ENCODE measurements at regions of chr7 and their contacts with region 1.

Region 1: DNA sequence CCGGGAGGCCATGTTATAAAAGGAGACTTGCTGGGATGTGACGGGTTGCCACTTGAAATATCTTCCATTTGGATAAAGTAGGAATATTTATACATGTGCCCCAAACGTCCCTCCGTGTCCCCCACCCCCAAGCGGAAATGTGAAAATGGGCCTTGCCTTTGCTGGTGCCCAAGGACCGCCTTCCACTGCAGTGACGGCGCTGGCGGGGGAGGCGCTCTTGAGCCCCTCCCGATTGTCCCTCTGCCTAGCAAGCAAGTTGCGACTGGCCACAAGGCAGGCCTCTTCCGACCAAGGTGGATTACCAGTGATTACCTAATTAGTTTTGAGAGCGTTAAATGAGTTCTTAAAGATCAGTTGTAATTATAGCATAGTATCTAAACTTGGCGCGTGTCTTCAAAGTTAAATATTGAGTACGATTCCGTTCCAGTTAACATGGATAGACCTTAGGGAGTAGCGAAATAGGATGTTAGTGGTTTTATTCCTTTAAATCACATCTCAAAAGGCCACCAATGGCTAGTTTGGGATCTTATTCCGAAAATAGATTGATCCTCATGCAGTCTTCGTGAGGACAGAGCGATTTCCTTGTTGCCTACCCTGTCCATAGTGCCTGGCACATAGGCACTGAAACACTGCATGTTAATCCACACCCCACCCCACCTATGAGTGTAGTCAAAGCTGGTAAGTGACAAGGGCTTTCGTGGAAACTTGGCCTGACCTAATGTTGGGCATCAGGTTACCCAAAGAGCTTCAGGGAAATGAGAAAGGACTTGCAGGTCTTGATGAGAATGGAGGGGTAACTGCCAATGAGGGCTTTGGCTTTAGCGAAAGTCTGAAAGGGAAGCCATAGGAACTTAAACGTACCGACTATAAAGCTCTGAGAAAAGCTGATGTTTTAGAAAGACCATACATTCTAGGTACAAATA is 1.1 kb downstream of the PPIA start:
- DNase-seq: peak; percentile 64
- ATAC-seq: peak; percentile 58
- H3K4me3 ChIP-seq: peak overlapping the region; percentile 80 to 96
- H3K27ac ChIP-seq: peak overlapping the region; percentile 99
- H3K4me1 ChIP-seq: peaks cover 9 to 41% of the 10 kb centered on the region in 2 experiments; a peak in 3 of 4 replicates
- H3K27me3 ChIP-seq: no peaks in the 10 kb centered on the region
- CTCF ChIP-seq: peak in 2 of 3 experiments; percentile 39 to 40; a peak in 3 of 6 replicates
- POLR2A ChIP-seq: no peak
- RAD21 ChIP-seq: no peak

Region 2: GRCh38 chr7:44375236-44375699 is 422.3 kb before region 1 on chr7:
- CTCF ChIA-PET with region 1: no interaction called
- POLR2A ChIA-PET with region 1: no interaction called
- RAD21 ChIA-PET with region 1: no interaction called
- intact Hi-C with region 1: no loop called
- DNase-seq: no peak
- ATAC-seq: peak; percentile 75
- H3K4me3 ChIP-seq: no peak overlapping the region
- H3K27ac ChIP-seq: no peak overlapping the region
- H3K4me1 ChIP-seq: peaks cover 0 to 14% of the 10 kb centered on the region in 2 experiments; a peak in 1 of 4 replicates
- H3K27me3 ChIP-seq: peaks cover 4% of the 10 kb centered on the region; the same call in 1 of the 2 replicates
- CTCF ChIP-seq: peak in 2 of 3 experiments; percentile 60 to 64; a peak in 4 of 6 replicates
- POLR2A ChIP-seq: no peak
- RAD21 ChIP-seq: peak; percentile 59

Region 3: DNA sequence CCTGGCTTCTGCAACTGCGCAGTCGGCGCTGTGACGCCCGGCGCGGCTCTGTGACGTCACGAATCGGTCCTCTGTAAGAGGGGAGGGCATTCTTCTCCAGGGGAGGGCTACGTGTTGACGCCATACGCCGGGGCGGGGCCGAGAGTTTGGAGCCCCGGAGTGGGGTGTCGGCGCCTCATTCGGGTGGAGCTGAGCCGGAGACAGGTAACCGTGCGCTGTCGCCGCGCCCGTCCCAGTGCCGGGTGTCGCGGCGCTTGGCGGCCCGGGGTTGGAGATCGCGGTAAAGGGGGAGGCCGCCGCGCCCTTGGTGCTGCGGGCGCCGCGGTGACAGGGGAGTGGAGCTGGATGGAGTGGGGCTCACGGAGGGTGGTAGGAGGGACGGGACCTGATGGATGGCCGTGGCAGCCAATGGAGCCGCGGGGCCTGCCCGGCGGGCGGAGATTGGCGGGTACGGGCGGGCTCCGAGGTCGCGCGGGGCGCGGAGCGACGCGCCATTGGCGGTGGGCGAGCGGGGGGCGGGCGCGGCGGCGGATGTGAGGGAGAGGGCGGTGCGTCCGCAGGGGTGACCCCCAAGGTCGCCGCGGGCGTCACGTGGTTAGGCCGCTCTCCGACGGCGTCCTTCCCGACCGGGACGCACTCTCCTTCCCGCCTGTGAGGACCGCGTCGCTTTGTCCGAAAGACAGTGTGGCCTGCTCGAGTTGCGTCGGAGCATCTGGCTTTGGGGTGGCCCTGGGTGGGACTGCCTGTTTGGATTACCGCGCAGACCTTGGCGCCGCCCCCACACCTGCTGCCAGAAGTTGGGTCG is 190.9 kb before region 1 on chr7 and contains the start of gene OGDH:
- CTCF ChIA-PET with region 1: no interaction called
- POLR2A ChIA-PET with region 1: no interaction called
- RAD21 ChIA-PET with region 1: no interaction called
- intact Hi-C with region 1: loop called (anchors 1 kb)
- DNase-seq: peak; percentile 96
- ATAC-seq: peak; percentile 99
- H3K4me3 ChIP-seq: peak within 1 kb of the TSS; percentile 68 to 76
- H3K27ac ChIP-seq: peak within 1 kb of the TSS; percentile 88
- H3K4me1 ChIP-seq: peaks cover 17 to 32% of the 10 kb centered on the region in 2 experiments
- H3K27me3 ChIP-seq: no peaks in the 10 kb centered on the region
- CTCF ChIP-seq: no peak
- POLR2A ChIP-seq: peak; percentile 31
- RAD21 ChIP-seq: no peak; the same call in 1 of the 2 replicates
- total RNA-seq, gene OGDH: 69.1 TPM

Region 4: GRCh38 chr7:44638611-44639557 is 158.7 kb before region 1 on chr7:
- CTCF ChIA-PET with region 1: no interaction called
- POLR2A ChIA-PET with region 1: interaction called, 3 read pairs
- RAD21 ChIA-PET with region 1: no interaction called
- intact Hi-C with region 1: loop called (anchors 1 kb)
- DNase-seq: peak; percentile 74
- ATAC-seq: peak; percentile 84
- H3K4me3 ChIP-seq: peak overlapping the region; percentile 25 to 40
- H3K27ac ChIP-seq: peak overlapping the region; percentile 98
- H3K4me1 ChIP-seq: peaks cover 43 to 68% of the 10 kb centered on the region in 2 experiments
- H3K27me3 ChIP-seq: no peaks in the 10 kb centered on the region
- CTCF ChIP-seq: no peak
- POLR2A ChIP-seq: peak; percentile 71
- RAD21 ChIP-seq: peak; percentile 35

Region 5: GRCh38 chr7:44847508-44847920 is 49.9 kb after region 1 on chr7:
- CTCF ChIA-PET with region 1: interaction called, 3 read pairs
- POLR2A ChIA-PET with region 1: interaction called, 3 read pairs
- RAD21 ChIA-PET with region 1: no interaction called
- intact Hi-C with region 1: loop called (anchors 5 kb)
- DNase-seq: peak; percentile 51
- ATAC-seq: peak; percentile 76
- H3K4me3 ChIP-seq: peak overlapping the region; percentile 84 to 97
- H3K27ac ChIP-seq: peak overlapping the region; percentile 81
- H3K4me1 ChIP-seq: peaks cover 5 to 24% of the 10 kb centered on the region in 2 experiments; a peak in 3 of 4 replicates
- H3K27me3 ChIP-seq: no peaks in the 10 kb centered on the region
- CTCF ChIP-seq: peak; percentile 61 to 85 (median 76)
- POLR2A ChIP-seq: no peak
- RAD21 ChIP-seq: peak; percentile 90

Region 6: GRCh38 chr7:44921607-44922359 is 124.2 kb after region 1 on chr7:
- CTCF ChIA-PET with region 1: no interaction called
- POLR2A ChIA-PET with region 1: no interaction called
- RAD21 ChIA-PET with region 1: no interaction called
- intact Hi-C with region 1: loop called (anchors 10 kb)
- DNase-seq: peak; percentile 59
- ATAC-seq: peak; percentile 98
- H3K4me3 ChIP-seq: no peak overlapping the region
- H3K27ac ChIP-seq: no peak overlapping the region
- H3K4me1 ChIP-seq: peaks cover 0 to 6% of the 10 kb centered on the region in 2 experiments; a peak in 1 of 4 replicates
- H3K27me3 ChIP-seq: no peaks in the 10 kb centered on the region
- CTCF ChIP-seq: peak; percentile 65 to 89 (median 86)
- POLR2A ChIP-seq: no peak
- RAD21 ChIP-seq: peak; percentile 88

Measured in HCT116 (cell line).